PC-3 (cell line): ENCODE measurements at regions of chr9 and their contacts with region 1.

Region 1: GRCh38 chr9:35110327-35110761 is 5.3 kb downstream of the ATOSB start:
- DNase-seq: peak; percentile 56
- ATAC-seq: peak; percentile 7; the same call in 1 of the 2 replicates
- H3K4me3 ChIP-seq: peak overlapping the region; percentile 82
- H3K27ac ChIP-seq: no peak overlapping the region
- H3K4me1 ChIP-seq: peaks cover 43% of the 10 kb centered on the region
- H3K27me3 ChIP-seq: no peaks in the 10 kb centered on the region
- CTCF ChIP-seq: no peak

Region 2: GRCh38 chr9:35070823-35071813 is 39.2 kb before region 1 on chr9:
- CTCF ChIA-PET with region 1: interaction called, 11 read pairs
- POLR2A ChIA-PET with region 1: no interaction called
- intact Hi-C with region 1: no loop called
- DNase-seq: peak; percentile 28
- ATAC-seq: no peak
- H3K4me3 ChIP-seq: peak overlapping the region; percentile 97
- H3K27ac ChIP-seq: peak overlapping the region; percentile 96
- H3K4me1 ChIP-seq: peaks cover 18% of the 10 kb centered on the region
- H3K27me3 ChIP-seq: no peaks in the 10 kb centered on the region
- CTCF ChIP-seq: no peak

Region 3: DNA sequence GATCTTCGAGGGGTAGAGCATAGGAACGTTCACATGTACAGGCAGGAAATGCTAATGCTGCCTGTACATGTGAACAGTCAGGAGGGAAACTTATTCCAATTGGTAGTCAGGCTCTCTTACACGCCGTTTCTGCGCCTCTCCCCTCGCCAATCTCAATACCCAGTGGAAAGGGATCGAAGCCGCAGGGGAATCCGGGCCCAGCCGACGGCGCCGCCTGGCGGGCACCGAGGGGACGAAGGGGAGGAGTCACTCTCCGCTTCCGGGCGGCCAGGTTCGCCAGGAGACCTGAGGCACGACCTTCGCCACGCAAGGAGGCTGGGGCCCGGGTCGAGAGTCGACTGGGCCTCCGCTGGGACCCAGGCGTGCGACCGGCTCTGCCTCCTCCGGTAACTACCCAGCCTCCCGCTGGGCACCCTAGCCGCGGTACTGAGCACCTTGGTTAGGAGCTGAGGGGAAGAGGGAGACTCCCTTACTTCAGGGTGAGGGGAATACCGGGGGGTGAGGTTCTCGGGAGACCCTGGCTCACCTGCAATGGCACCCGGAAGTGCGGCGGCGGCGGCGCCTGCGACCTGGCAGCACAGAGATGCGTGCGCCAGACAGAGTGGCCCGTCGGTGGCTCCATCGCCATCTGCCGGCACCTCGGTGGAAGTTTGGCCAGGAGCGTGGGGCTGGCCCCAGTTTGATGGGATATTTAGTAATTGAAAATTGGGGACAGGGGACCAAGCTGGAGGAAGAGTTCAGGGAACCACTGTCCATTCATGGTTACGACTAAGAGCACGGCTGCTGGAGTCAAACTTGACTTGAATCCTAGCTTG is 14.1 kb before region 1 on chr9 and contains the start of gene PIGO:
- CTCF ChIA-PET with region 1: no interaction called
- POLR2A ChIA-PET with region 1: no interaction called
- intact Hi-C with region 1: no loop called
- DNase-seq: peak; percentile 77
- ATAC-seq: peak; percentile 98
- H3K4me3 ChIP-seq: peak within 1 kb of the TSS; percentile 90
- H3K27ac ChIP-seq: peak within 1 kb of the TSS; percentile 93
- H3K4me1 ChIP-seq: no peaks in the 10 kb centered on the region; the same call in 1 of the 2 replicates
- H3K27me3 ChIP-seq: no peaks in the 10 kb centered on the region
- CTCF ChIP-seq: peak; percentile 65
- total RNA-seq, gene PIGO: 18.2 and 19.9 TPM in 2 replicates